GM10248 (cell line): ENCODE measurements at regions of chr1 and their contacts with region 1.

Region 1: GRCh38 chr1:43934101-43934985 is 742 bp downstream of the ARTN start:
- DNase-seq: peak; percentile 90
- CTCF ChIP-seq: peak; percentile 92

Region 2: GRCh38 chr1:43227143-43227764 is 707.1 kb before region 1 on chr1:
- CTCF ChIA-PET with region 1: interaction called, 13 read pairs
- POLR2A ChIA-PET with region 1: no interaction called
- DNase-seq: peak; percentile 82
- CTCF ChIP-seq: peak; percentile 90

Region 3: DNA sequence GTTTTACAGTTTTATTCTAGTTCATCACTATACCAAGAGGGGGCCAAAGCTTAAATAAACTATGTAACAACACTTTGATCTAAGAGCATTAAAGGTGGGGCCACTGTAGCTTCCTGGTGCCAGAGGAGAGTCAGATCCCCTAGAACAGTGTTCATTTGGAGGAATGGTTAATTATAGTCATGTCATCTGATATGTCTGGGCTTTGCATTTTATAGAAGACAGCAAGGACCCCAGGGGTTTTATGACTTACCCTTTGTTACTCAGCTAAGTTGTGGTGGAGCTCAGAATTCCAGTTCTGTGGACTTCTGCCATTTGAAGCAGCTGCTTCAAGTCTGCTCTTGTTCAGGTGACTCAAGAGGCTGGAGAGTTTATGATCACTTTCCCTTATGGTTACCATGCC is 267.7 kb before region 1 on chr1:
- CTCF ChIA-PET with region 1: interaction called, 18 read pairs
- POLR2A ChIA-PET with region 1: no interaction called
- DNase-seq: no peak
- CTCF ChIP-seq: no peak

Region 4: GRCh38 chr1:43763497-43763973 is 170.8 kb before region 1 on chr1:
- CTCF ChIA-PET with region 1: interaction called, 526 read pairs
- POLR2A ChIA-PET with region 1: interaction called, 7 read pairs
- DNase-seq: peak; percentile 61
- CTCF ChIP-seq: peak; percentile 86

Region 5: GRCh38 chr1:43861337-43861736 is 73.0 kb before region 1 on chr1:
- CTCF ChIA-PET with region 1: interaction called, 11 read pairs
- POLR2A ChIA-PET with region 1: no interaction called
- DNase-seq: no peak
- CTCF ChIP-seq: no peak

Region 6: GRCh38 chr1:43946236-43947060 is 12.1 kb after region 1 on chr1 and contains the start of gene IPO13:
- CTCF ChIA-PET with region 1: interaction called, 191 read pairs
- POLR2A ChIA-PET with region 1: no interaction called
- DNase-seq: peak; percentile 99
- CTCF ChIP-seq: peak; percentile 92

Region 7: DNA sequence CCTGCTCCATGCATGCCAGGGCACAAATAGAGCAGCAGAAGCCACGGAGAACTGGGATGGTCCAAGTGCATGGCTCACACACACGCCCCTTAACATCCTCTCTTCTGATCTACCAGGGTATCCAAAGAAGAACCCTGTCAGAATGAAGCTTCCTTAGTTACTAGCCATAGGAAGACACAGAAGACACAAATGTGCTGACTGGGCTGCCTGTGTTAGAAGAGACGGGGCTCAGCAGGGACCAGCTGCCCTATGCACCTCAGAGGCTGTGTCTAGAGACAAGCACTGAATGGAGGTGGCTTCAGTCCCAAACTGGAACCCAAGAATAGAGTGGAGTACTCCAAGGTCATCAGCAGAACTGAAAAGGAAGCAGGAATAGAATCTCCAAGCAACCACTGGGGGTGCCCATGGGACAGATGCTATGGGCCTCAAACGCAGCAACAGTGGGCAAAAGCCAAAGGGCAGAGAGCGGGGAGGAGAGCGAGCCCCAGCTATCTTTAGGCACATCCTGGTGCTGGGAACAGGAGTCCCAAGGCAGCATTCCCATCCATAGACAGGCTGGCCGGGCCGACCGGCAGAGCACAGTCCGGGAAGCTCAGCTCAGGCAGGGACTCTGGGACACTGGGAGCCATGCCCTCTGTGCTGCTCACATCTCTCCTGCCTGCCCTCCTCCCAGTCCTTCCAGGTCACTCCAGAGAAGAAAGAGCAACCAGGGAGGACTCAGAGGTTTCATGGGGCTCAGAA is 87.4 kb after region 1 on chr1:
- CTCF ChIA-PET with region 1: no interaction called
- POLR2A ChIA-PET with region 1: no interaction called
- DNase-seq: no peak
- CTCF ChIP-seq: no peak

Region 8: DNA sequence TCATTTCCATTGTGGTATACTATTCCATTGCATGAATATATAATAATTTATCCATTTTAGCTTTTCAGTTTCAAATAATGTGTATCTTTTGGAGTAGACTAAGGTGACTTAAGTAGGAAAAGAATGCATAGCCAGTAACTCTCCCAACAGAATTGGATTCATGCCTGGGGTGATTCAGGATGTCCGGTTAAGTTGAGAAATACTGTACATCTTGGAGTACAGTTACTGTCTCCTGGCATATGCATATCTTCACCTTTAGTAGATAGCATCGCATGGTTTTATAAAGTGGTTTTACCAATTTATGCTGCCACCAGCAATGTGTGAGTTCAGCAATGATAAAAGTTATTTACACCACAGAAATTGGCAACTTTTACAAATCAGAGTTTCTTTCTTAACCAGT is 115.5 kb after region 1 on chr1:
- CTCF ChIA-PET with region 1: interaction called, 11 read pairs
- POLR2A ChIA-PET with region 1: no interaction called
- DNase-seq: no peak
- CTCF ChIP-seq: no peak